ENCODE measurements at regions of chr2 and their contacts with region 1.

Region 1: DNA sequence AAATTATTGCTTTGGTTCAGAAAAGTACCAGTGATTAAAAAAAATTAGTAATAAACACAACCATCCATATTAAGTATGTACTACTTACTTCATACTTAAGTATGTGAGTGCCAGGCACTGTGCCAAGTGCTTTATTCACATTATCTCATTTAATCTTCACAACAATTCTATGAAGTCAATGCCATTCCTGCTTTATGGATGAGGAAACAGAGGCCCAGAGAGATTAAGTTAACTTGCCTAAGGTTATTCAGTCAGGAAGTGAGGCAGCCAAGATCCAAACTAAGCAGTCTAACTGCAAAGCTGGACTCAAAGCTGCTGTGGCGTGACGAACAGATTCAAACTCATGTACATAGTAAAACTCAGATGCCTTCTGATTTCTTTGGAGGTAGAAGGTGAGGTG is 22.3 kb downstream of the DTNB start:
- DNase-seq: no peak
- H3K4me3 ChIP-seq: no peak overlapping the region
- CTCF ChIP-seq: no peak
- POLR2A ChIP-seq: no peak

Region 2: DNA sequence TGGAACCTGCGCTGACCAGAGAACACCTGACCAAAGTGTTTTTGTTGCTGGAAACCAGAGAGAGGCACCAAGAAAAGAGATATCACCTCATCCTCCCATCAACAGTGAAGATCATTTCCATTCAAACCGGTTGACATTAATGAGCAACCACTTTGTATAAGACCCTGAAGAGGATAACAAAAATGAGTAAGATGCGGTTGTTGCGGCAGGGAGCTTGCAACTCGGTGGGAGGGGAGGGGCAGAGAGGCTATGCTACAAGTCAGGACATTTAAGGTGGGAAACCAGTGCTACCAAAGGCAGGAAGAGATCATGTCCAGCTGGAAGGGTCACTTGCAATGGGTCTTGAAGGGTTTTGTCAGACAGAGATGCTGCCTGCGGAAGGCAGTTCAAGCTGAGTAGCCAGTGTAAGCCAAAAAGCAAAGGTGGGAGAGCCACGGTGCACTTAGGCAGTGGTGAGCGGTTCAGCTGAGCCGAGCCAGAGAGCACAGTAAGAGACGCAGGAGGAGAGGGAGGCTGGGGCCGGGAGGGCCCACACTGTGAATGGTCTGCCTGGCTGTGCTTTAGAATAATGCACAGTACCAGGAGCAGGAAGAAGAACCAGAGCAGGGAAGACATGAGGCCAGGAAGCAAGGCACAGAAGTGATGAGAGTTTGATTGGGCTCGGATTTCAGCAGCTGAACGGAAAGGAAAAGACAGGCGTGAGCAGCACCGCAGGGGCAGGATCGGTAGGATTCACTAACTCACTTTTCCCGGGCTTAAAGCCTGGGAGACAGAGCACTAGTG is 46.7 kb after region 1 on chr2:
- intact Hi-C with region 1: loop called (anchors 5 kb)
- DNase-seq: no peak
- H3K4me3 ChIP-seq: no peak overlapping the region
- CTCF ChIP-seq: no peak
- POLR2A ChIP-seq: no peak

Region 3: DNA sequence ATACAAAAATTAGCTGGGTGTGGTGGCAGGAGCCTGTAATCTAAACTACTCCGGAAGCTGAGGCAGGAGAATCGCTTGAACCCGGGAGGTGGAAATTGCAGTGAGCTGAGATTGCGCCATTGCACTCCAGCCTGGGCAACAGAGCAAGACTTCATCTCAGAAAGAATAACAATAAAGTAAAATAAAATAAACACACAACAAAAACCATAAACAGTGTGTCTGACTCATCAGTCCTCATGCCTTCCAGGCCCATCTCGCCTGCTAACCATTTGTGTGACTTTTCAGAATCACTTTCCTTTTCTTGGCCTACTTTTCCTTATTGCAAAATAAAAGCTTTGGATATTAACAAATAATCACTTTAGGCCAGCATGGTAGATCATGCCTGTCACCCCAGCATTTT is 269.3 kb after region 1 on chr2:
- intact Hi-C with region 1: no loop called
- DNase-seq: no peak
- H3K4me3 ChIP-seq: no peak overlapping the region
- CTCF ChIP-seq: no peak
- POLR2A ChIP-seq: no peak